Naive thymus-derived CD8-positive, alpha-beta T cell (primary cell): ENCODE measurements at regions of chr19 and their contacts with region 1.

Region 1: GRCh38 chr19:7718668-7719067 is 13.2 kb downstream of the CLEC4G start:
- DNase-seq: peak in 5 of 10 donors; percentile 23 to 58 (median 30)
- ATAC-seq: peak; percentile 93 to 94
- H3K4me3 Mint-ChIP-seq: peak overlapping the region; percentile 42 to 79 (median 68)
- H3K27ac Mint-ChIP-seq: peak overlapping the region; percentile 25 to 95 (median 89)
- H3K4me1 Mint-ChIP-seq: peaks cover 0 to 55% (median 23%) of the 10 kb centered on the region in 4 donors
- H3K27me3 Mint-ChIP-seq: no peaks in the 10 kb centered on the region

Region 2: DNA sequence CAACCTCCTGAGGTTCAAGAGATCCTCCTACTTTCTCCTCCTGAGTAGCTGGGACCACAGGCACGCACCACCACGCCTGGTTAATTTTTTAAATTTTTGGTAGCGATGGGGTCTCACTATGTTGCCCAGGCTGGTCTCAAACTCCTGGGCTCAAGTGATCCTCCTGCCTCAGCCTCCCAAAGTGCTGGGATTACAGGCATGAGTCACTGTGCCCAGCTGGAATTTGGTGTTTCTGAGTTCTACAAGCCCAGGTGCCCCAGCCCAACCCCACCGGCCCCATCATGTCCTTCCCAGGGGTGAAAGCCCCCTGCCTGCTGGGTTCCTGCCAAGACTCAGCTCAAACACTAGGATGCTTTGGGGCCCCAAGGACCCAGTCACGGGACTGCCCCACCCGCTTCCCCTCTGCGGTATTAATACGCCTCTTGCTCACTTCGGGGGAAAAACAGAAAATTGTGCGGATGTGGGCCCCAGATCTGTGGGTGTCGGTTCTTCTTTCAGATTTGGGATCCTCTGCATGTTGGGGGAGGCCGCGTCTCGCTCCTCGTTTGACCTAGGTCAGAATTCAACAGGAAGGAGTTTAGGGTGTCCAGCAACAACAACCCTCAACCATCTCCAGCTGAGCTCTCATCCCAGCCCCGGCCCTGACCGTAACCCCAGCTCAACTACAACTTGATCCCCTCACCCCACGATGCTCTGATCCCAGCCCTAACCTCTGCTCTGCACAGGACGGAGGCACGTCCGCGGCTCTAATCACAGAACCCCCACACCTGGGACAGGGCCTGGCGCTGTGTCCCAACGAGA is 13.1 kb before region 1 on chr19:
- POLR2A ChIA-PET with region 1: interaction called, 12 read pairs
- DNase-seq: peak; percentile 48 to 90 (median 77)
- ATAC-seq: peak; percentile 95 to 99
- H3K4me3 Mint-ChIP-seq: peak overlapping the region; percentile 74 to 91 (median 80)
- H3K27ac Mint-ChIP-seq: peak overlapping the region; percentile 96 to 99 (median 98)
- H3K4me1 Mint-ChIP-seq: peaks cover 28 to 73% (median 70%) of the 10 kb centered on the region in 4 donors
- H3K27me3 Mint-ChIP-seq: no peaks in the 10 kb centered on the region